ENCODE measurements at regions of chr1 and their contacts with region 1.

Region 1: GRCh38 chr1:67347688-67348472 is 40.2 kb downstream of the IL12RB2 start:
- DNase-seq: peak; percentile 57
- H3K4me3 ChIP-seq: no peak overlapping the region
- H3K27ac ChIP-seq: no peak overlapping the region
- H3K4me1 ChIP-seq: no peaks in the 10 kb centered on the region
- H3K27me3 ChIP-seq: peaks cover 0 to 10% of the 10 kb centered on the region in 2 experiments
- CTCF ChIP-seq: peak; percentile 74 to 76
- POLR2A ChIP-seq: no peak

Region 2: GRCh38 chr1:67285780-67286488 is 61.9 kb before region 1 on chr1:
- CTCF ChIA-PET with region 1: no interaction called
- POLR2A ChIA-PET with region 1: no interaction called
- dilution Hi-C with region 1: no loop called
- intact Hi-C with region 1: no loop called
- DNase-seq: peak; percentile 30
- H3K4me3 ChIP-seq: no peak overlapping the region
- H3K27ac ChIP-seq: peak overlapping the region; percentile 45
- H3K4me1 ChIP-seq: peaks cover 11% of the 10 kb centered on the region
- H3K27me3 ChIP-seq: no peaks in the 10 kb centered on the region
- CTCF ChIP-seq: no peak
- POLR2A ChIP-seq: no peak

Region 3: DNA sequence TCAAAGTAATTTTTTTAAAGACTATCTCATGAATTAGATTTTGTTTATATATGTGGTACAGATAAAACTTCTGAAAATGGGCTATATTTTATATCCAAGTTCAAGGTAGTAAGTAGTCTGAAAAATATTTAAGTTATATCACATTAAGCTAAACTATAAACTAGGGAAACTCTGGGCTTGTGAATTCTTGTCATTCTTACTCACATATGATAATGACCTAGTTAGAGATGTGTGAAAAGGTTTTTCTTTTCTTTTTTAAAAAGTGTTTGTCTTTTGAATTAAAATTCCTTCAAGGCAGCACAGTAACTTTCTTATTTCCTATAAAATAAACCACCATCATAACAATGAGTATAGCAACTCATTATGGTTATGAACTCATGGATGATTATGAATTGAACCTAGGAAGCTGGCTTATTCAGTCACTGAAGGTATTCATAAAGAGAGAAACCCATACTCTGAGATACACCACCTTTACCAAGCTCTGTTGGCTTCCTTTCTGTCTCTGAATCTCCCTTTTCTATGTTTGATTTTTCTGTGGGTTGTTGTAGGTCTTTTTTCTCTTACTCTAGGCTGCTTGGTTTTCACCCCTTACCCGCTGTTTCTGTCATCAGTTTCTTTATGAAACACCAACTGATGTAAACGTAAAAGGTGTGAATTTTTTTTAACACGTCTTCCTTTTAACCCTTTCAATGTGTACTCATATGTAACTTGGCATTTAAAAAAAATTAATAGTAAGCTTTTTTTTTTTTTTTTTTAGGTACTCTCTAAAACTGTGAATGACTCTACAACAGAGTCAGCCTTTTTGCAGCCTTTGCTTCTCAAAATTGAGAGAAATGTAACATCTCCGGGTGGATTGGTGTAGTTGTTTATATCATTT is 15.0 kb before region 1 on chr1:
- CTCF ChIA-PET with region 1: interaction called, 28 read pairs
- POLR2A ChIA-PET with region 1: no interaction called
- dilution Hi-C with region 1: no loop called
- intact Hi-C with region 1: no loop called
- DNase-seq: no peak
- H3K4me3 ChIP-seq: no peak overlapping the region
- H3K27ac ChIP-seq: no peak overlapping the region
- H3K4me1 ChIP-seq: no peaks in the 10 kb centered on the region
- H3K27me3 ChIP-seq: peaks cover 3 to 6% of the 10 kb centered on the region in 2 experiments
- CTCF ChIP-seq: no peak
- POLR2A ChIP-seq: no peak

Region 4: GRCh38 chr1:67489643-67490042 is 141.8 kb after region 1 on chr1:
- CTCF ChIA-PET with region 1: interaction called, 80 read pairs
- POLR2A ChIA-PET with region 1: no interaction called
- dilution Hi-C with region 1: no loop called
- intact Hi-C with region 1: loop called (anchors 1 kb)
- DNase-seq: peak; percentile 58
- H3K4me3 ChIP-seq: no peak overlapping the region
- H3K27ac ChIP-seq: no peak overlapping the region
- H3K4me1 ChIP-seq: no peaks in the 10 kb centered on the region
- H3K27me3 ChIP-seq: no peaks in the 10 kb centered on the region
- CTCF ChIP-seq: peak; percentile 24 to 44
- POLR2A ChIP-seq: no peak

Region 5: GRCh38 chr1:67599085-67599484 is 251.2 kb after region 1 on chr1:
- CTCF ChIA-PET with region 1: no interaction called
- POLR2A ChIA-PET with region 1: no interaction called
- dilution Hi-C with region 1: no loop called
- intact Hi-C with region 1: no loop called
- DNase-seq: no peak
- H3K4me3 ChIP-seq: no peak overlapping the region
- H3K27ac ChIP-seq: no peak overlapping the region
- H3K4me1 ChIP-seq: no peaks in the 10 kb centered on the region
- H3K27me3 ChIP-seq: no peaks in the 10 kb centered on the region
- CTCF ChIP-seq: no peak
- POLR2A ChIP-seq: no peak